Tibial artery (tissue), 4 donors: ENCODE measurements at regions of chr17 and their contacts with region 1.

Region 1: DNA sequence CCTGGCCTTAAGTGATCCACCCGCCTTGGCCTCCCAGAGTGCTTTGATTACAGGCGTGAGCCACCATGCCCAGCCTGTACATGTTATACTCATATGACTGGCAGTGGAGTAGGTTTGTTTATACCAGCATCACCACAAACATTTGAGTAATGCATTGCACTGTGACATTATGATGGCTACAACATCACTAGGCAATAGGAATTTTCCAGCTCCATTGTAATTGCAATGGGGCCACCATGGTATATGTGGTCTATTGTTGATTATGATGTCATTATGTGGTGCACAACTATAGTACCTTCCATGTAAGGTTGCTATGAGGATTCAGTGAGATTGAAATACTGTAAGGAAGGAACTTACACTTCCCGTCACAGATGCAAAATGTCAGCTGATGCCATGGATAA is 168.9 kb downstream of the COPRS start:
- DNase-seq: no peak
- H3K4me3 ChIP-seq: no peak overlapping the region
- H3K27ac ChIP-seq: no peak overlapping the region
- H3K4me1 ChIP-seq: peaks cover 0 to 41% (median 36%) of the 10 kb centered on the region in 4 donors
- H3K27me3 ChIP-seq: no peaks in the 10 kb centered on the region
- CTCF ChIP-seq: no peak

Region 2: DNA sequence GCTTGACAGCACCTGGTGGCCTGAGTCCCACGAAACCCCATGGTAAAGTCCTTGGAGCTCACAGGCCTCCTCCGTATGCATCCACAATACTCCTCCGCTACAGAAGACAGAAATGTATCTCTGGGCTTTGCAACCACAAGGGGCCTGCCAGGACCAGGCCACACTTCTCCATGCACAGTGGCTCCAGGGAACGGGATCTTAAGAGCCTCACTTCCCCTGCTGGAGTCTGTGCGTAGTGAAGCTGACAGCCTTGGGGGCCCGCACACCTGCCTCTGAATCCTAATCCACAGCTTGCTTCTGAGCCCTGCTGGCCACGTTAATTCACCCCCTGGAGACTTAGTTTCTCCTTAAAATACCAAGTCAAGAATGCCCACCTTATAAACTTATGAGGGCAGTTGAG is 43.2 kb after region 1 on chr17:
- intact Hi-C with region 1: loop called (anchors 5 kb)
- DNase-seq: no peak
- H3K4me3 ChIP-seq: no peak overlapping the region
- H3K27ac ChIP-seq: peak overlapping the region in 1 of 2 donors; percentile 17
- H3K4me1 ChIP-seq: peaks cover 0 to 43% (median 16%) of the 10 kb centered on the region in 4 donors
- H3K27me3 ChIP-seq: no peaks in the 10 kb centered on the region
- CTCF ChIP-seq: no peak

Region 3: GRCh38 chr17:31754239-31754945 is 64.2 kb after region 1 on chr17:
- intact Hi-C with region 1: no loop called
- DNase-seq: no peak
- H3K4me3 ChIP-seq: no peak overlapping the region
- H3K27ac ChIP-seq: no peak overlapping the region
- H3K4me1 ChIP-seq: peaks cover 0 to 33% (median 7%) of the 10 kb centered on the region in 4 donors
- H3K27me3 ChIP-seq: no peaks in the 10 kb centered on the region
- CTCF ChIP-seq: no peak